Ovary (tissue), 10 donors: ENCODE measurements at regions of chr18 and their contacts with region 1.

Region 1: DNA sequence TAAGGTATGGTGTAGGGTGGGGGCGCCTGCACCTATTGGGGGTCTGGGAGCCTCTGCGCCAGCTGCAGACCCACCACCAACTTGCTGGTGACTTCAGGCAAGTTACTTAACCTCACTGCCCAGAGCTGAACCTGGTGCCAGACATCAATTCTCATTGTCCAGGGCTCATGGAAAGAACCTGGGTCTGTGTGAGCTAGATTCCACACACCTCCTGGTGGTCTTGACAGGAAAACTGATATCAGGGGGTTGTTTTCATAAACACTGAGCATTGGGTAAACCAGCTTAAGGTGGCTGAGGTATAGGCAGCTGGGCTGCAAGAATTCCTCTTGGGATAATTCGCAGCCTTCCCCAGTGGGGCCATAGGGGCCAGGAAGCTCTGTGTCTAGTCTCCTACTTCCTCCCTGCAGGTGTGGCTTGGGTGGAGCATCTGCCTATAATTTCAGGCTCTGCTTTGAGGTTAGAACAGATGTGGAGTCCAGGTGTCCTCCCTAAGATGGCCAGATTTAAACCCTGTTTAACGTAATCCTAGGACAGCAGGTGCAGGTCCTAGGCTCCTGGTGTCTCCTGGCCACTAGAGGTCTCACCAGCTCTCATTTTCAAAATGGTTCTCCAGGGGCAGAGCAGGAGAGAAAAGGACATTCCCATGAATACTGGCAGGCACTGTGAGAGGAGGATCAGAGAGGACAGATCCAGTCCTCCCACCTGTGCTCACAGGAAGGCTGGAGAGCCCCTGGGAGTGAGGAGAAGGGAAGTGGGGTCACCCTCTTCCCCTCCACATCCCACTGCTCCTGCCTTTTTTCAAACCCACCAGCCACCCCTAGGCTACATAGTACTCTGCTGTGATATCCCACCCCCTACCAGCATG is 100.4 kb upstream of the SMAD2 start:
- DNase-seq: peak; percentile 61 to 76 (median 65)
- H3K4me3 ChIP-seq: no peak overlapping the region
- H3K27ac ChIP-seq: no peak overlapping the region
- H3K4me1 ChIP-seq: peaks cover 4% of the 10 kb centered on the region
- H3K27me3 ChIP-seq: no peaks in the 10 kb centered on the region
- CTCF ChIP-seq: peak; percentile 52 to 66 (median 66)
- EP300 ChIP-seq: no peak
- POLR2A ChIP-seq: no peak

Region 2: DNA sequence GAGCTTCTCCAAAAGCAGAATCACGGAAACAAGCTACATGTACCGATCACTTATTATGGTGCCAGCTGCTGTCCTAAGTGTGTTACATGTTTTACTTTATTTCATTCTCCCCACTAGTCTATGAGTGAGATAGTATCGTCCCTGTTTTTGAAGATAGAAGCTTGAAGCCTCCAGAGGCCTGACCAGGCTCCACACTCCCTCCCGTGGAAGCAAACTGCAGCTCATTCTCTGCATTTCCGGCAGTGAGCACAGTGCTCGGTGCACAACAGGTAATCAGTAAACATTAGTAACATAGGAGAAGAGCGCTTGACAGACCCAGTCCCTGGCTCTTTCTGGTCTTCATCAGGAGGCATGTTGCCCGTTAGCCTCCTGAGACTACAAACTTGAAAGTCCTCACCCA is 305.5 kb after region 1 on chr18:
- intact Hi-C with region 1: loop called in 3 of 4 experiments (anchors 5 to 10 kb)
- DNase-seq: no peak
- H3K4me3 ChIP-seq: no peak overlapping the region
- H3K27ac ChIP-seq: no peak overlapping the region
- H3K4me1 ChIP-seq: peaks cover 11% of the 10 kb centered on the region
- H3K27me3 ChIP-seq: no peaks in the 10 kb centered on the region
- CTCF ChIP-seq: no peak
- EP300 ChIP-seq: no peak
- POLR2A ChIP-seq: no peak

Region 3: GRCh38 chr18:48345596-48345995 is 314.7 kb after region 1 on chr18:
- intact Hi-C with region 1: loop called in 1 of 4 experiments (anchors 10 kb)
- DNase-seq: no peak
- H3K4me3 ChIP-seq: no peak overlapping the region
- H3K27ac ChIP-seq: no peak overlapping the region
- H3K4me1 ChIP-seq: peaks cover 5% of the 10 kb centered on the region
- H3K27me3 ChIP-seq: no peaks in the 10 kb centered on the region
- CTCF ChIP-seq: no peak
- EP300 ChIP-seq: no peak
- POLR2A ChIP-seq: no peak

Region 4: GRCh38 chr18:48428475-48429177 is 397.8 kb after region 1 on chr18:
- intact Hi-C with region 1: no loop called
- DNase-seq: no peak
- H3K4me3 ChIP-seq: no peak overlapping the region
- H3K27ac ChIP-seq: no peak overlapping the region
- H3K4me1 ChIP-seq: no peaks in the 10 kb centered on the region
- H3K27me3 ChIP-seq: no peaks in the 10 kb centered on the region
- CTCF ChIP-seq: no peak
- EP300 ChIP-seq: no peak
- POLR2A ChIP-seq: no peak